Heart right ventricle (tissue), 16 donors: ENCODE measurements at regions of chr13 and their contacts with region 1.

Region 1: GRCh38 chr13:26872525-26873385 is 112.2 kb upstream of the GPR12 start:
- DNase-seq: peak; percentile 40 to 60
- ATAC-seq: peak in 4 of 8 donors; percentile 46 to 69 (median 62)
- H3K4me3 ChIP-seq: no peak overlapping the region
- H3K27ac ChIP-seq: no peak overlapping the region
- H3K4me1 ChIP-seq: no peaks in the 10 kb centered on the region
- H3K27me3 ChIP-seq: peaks cover 0 to 40% (median 24%) of the 10 kb centered on the region in 7 donors
- CTCF ChIP-seq: peak; percentile 39 to 77 (median 71)

Region 2: GRCh38 chr13:26707122-26708006 is 165.4 kb before region 1 on chr13:
- intact Hi-C with region 1: loop called (anchors 1 to 5 kb)
- DNase-seq: peak in 1 of 2 donors; percentile 36
- ATAC-seq: peak; percentile 43 to 89 (median 74)
- H3K4me3 ChIP-seq: no peak overlapping the region
- H3K27ac ChIP-seq: no peak overlapping the region
- H3K4me1 ChIP-seq: no peaks in the 10 kb centered on the region
- H3K27me3 ChIP-seq: peaks cover 0 to 37% (median 6%) of the 10 kb centered on the region in 7 donors
- CTCF ChIP-seq: peak; percentile 42 to 77 (median 66)